Activated CD4-positive, alpha-beta T cell treated with anti-CD3 and anti-CD28 coated beads, Interleukin-2, amount 10 ng/mL, durations not matched to agents 24 days and 14 days (primary cell): ENCODE measurements at regions of chr3 and their contacts with region 1.

Region 1: GRCh38 chr3:108292905-108293328 is 3.4 kb upstream of the HHLA2 start:
- DNase-seq: peak; percentile 74
- H3K4me3 Mint-ChIP-seq: peak overlapping the region; percentile 58
- H3K27ac Mint-ChIP-seq: peak overlapping the region; percentile 85
- H3K4me1 Mint-ChIP-seq: peaks cover 60% of the 10 kb centered on the region
- H3K27me3 Mint-ChIP-seq: no peaks in the 10 kb centered on the region

Region 2: DNA sequence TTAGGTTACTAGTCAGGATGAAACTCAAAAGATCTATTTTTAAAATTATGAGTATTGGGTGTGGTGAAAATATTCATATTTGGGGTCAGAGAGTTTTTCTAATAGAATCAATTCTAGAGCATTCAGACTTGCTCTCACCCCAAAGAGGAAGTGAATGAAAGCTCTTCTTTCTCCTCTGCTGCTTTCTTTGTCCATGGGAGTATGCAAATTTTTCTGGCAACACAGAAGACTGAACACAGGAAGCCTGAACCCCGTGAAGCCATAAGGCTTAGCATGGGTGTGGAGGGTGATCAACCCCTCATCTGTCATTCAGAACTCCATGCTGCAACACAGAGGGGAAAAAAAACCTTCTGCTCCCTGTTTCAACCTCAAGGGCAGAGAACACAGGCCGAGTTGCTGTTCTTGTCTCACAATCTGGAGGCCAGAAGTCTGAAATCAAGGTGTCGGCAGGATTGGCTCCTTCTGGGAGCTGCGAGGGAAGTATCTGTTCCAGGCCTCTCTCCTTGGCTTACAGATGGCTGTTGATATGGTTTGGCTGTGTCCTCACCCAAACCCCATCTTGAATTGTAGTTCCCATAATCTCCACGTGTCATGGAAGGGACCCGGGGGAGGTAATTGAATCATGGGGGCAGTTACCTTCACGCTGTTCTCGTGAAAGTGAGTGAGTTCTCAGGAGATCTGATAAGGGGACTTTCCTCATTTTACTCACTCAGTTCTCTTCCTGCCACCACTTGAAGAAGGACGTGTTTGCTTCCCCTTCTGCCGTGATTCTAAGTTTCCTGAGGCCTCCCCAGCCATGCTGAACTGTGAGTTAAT is 168.4 kb before region 1 on chr3:
- intact Hi-C with region 1: loop called (anchors 2 kb)
- DNase-seq: peak; percentile 91
- H3K4me3 Mint-ChIP-seq: peak overlapping the region; percentile 96
- H3K27ac Mint-ChIP-seq: peak overlapping the region; percentile 99
- H3K4me1 Mint-ChIP-seq: peaks cover 53% of the 10 kb centered on the region
- H3K27me3 Mint-ChIP-seq: no peaks in the 10 kb centered on the region

Region 3: GRCh38 chr3:108328821-108329486 is 36.0 kb after region 1 on chr3:
- intact Hi-C with region 1: loop called (anchors 2 kb)
- DNase-seq: peak; percentile 65
- H3K4me3 Mint-ChIP-seq: peak overlapping the region; percentile 21
- H3K27ac Mint-ChIP-seq: peak overlapping the region; percentile 39
- H3K4me1 Mint-ChIP-seq: peaks cover 45% of the 10 kb centered on the region
- H3K27me3 Mint-ChIP-seq: no peaks in the 10 kb centered on the region

Region 4: GRCh38 chr3:108388136-108389132 is 95.5 kb after region 1 on chr3:
- intact Hi-C with region 1: loop called (anchors 1 kb)
- DNase-seq: no peak
- H3K4me3 Mint-ChIP-seq: peak overlapping the region; percentile 13
- H3K27ac Mint-ChIP-seq: peak overlapping the region; percentile 80
- H3K4me1 Mint-ChIP-seq: peaks cover 18% of the 10 kb centered on the region
- H3K27me3 Mint-ChIP-seq: peaks cover 11% of the 10 kb centered on the region

Region 5: DNA sequence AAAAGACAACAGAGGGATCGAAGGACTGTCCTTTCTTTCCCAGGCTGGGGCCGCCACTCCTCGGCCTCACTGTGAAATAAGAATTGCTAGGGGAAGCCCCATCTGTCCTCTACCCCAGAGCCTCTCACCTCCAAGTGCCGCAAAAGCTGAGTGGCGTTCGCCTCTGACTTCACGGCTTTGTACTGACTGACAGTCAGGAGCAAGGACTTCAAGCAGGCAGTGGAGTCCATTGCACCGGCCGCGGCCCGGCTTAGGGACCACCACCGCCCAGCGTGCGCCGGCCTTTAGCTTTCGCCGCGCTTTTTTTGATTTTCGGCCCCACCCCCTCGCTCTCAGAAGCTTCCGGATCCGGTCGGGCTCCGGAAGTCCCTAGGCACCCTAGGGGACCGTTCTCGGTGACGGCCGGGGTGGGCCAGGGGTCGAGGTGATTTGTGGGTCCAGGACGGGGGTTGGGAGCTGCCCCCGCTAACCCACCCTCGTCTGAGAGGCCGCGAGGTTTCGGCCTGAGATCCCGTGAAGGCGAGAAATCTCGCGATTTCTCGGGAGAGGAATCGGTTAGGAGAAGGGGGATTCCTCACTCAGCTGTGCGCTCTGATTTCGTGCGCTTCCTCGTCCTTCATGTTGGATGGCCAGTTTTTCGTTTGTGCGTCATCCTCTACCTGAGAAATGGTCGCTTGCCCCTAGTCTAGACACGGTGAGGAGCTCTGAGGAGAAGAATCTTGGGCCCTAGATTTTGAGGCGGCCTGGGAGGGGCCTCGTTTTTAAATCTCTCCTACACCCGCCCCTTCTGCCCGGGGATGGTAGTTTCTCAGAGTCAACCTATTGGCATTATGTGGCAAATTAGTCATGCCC is 296.5 kb after region 1 on chr3 and contains the starts of genes CIP2A and DZIP3:
- intact Hi-C with region 1: loop called (anchors 10 kb)
- DNase-seq: peak; percentile 95
- H3K4me3 Mint-ChIP-seq: peak within 1 kb of the TSS; percentile 97
- H3K27ac Mint-ChIP-seq: peak within 1 kb of the TSS; percentile 98
- H3K4me1 Mint-ChIP-seq: peaks cover 45% of the 10 kb centered on the region
- H3K27me3 Mint-ChIP-seq: no peaks in the 10 kb centered on the region
- total RNA-seq, gene CIP2A: 48.3 and 58.3 TPM in 2 replicates
- total RNA-seq, gene DZIP3: 4.1 and 4.7 TPM in 2 replicates

Region 6: DNA sequence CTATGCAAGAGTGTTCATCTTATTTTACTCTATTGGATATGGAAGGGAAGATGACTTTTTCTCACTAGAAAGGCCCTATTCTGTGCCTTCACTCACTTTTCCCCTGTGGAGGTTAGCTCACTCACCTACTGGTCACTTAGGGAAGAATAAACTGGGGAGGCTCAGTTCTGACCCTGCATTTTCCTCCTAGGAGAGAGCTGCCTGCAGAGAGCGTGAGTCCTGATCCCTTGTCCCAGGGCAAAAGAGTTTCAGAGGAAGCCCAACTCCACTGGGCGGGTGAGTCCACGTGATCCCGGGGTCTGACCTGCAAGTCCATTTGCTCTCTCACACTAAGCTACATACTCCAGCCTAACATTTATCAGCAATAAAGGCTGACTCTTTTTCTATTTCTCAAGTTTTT is 816.7 kb after region 1 on chr3:
- intact Hi-C with region 1: no loop called
- DNase-seq: no peak
- H3K4me3 Mint-ChIP-seq: no peak overlapping the region
- H3K27ac Mint-ChIP-seq: no peak overlapping the region
- H3K4me1 Mint-ChIP-seq: no peaks in the 10 kb centered on the region
- H3K27me3 Mint-ChIP-seq: peaks cover 2% of the 10 kb centered on the region